ENCODE measurements at regions of chr1 and their contacts with region 1.

Region 1: DNA sequence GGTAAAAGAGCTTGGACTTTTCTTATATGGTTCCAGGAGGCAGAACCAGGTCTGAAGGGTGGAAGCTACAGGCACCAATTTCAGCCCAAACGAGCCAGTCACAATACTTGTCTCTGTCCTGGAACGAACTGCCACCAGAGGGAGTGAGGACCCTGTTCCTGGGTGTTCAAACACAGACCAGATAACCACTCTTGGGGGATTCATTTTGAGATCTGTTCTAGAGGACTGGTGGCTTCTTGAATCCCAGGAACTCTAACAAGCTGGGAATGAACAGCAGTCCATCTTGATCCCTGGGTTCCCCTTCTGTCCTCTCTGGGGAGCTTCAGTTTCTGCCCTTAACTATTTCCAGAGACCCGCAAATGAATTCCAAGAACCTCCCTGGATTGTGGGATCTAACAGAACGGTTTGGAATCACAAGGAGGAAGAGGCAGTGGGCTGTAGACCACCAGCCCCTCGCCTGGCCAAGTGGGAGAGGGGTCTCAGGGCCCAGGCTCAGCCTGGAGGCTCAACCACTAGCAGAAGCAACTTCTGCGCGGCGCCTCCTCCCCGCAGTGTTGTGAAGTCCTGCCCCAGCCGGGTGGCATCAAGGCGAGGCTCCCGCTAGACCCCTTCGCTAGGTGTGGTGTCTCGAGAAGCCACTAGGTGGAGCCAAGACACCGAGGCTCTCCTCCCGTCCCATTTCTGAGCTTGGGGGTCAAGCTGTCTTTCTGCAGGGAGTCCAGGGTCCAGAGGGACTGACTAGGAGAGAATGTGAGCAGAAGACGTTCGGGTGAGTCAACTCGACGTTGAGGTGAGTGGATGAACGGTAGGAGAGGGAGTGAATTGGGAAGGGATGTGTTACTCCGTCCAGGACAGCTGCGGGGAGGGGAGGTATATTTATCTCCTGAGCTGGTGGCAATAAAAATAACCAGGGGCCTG is 12.1 kb upstream of the NES start:
- DNase-seq: no peak
- H3K4me3 ChIP-seq: peak overlapping the region; percentile 15; the same call in 1 of the 2 replicates
- H3K27me3 ChIP-seq: no peaks in the 10 kb centered on the region
- CTCF ChIP-seq: peak; percentile 95

Region 2: DNA sequence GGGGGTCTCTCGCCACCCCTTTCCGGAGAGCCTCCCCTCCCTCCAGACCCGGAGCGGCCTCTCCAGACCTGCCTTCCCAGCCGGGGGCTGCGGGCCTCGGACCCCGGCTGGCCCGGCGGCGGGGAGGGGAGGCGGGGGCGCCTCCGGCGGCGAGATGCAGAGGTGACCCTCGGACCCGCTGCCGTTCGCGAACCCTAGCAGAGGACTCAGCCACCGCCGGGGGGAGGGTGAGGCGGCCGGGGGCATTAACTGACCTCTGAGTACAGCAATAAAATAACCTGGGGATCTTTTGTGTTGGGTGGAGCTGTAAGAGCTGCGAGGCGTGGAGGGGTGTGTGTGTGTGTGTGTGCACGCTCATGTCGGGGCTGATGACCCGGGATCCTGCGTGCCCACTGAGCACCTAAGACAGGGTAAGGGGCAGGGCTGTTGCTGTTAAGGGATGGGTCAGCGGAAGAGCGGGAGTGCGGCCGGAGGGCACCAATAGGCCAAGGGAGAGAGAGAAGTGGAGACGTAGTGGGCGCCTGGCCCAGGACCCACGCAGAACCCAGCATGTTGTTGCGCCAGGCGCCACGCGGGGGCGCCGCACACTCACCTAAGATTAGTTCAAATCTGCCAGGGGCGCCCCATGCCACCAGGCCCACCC is 63.7 kb before region 1 on chr1:
- CTCF ChIA-PET with region 1: interaction called, 155 read pairs
- POLR2A ChIA-PET with region 1: no interaction called
- DNase-seq: no peak
- H3K4me3 ChIP-seq: no peak overlapping the region
- H3K27me3 ChIP-seq: peaks cover 29% of the 10 kb centered on the region
- CTCF ChIP-seq: peak; percentile 90

Region 3: DNA sequence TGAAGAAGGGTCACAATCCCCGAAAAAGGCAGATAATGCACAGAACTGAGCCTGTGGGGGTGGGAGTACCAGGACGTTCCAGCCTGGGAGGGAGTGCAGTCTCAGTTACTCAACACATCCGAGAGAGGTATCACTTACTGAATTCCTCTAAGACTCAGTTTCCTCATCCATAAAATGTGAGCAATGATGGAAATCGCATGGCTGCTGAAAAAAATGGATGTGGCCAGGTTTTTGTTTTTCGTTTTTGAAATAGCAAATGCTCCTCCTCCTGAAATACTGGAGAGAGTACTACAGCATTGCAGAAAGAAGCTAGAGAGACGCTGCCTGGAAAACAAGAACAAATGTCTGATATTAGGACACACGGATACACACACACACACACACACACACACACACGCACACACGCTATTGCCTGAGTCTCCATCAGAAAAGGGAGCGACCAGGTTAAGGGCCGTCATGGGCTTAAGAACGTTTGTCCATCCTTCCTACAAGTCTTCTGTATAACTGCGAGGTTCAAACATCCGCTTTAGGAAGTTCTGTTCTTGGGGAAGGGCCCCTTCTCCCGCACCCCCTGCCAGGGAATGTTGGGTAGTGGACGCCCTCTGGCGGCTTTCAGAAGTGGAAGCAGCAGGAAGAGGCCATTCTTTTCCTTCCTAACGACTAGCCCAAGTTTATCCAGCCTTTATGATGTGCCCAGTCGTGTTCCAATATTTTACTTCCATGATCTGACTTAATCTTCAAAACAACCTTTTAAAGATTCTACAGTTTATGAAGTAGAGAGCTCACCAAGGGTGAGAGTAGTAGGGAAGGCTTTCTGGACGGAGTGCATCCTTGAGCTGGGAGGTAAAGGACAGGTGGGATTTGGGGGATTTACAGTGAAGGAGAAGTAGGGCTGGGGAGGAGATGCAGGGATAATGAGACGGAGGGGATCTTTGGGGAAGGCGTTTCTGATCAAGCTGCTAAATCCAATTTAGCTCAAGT is 11.4 kb before region 1 on chr1:
- CTCF ChIA-PET with region 1: interaction called, 1,556 read pairs
- POLR2A ChIA-PET with region 1: no interaction called
- DNase-seq: no peak
- H3K4me3 ChIP-seq: peak overlapping the region; percentile 55
- H3K27me3 ChIP-seq: no peaks in the 10 kb centered on the region
- CTCF ChIP-seq: peak; percentile 93

Region 4: DNA sequence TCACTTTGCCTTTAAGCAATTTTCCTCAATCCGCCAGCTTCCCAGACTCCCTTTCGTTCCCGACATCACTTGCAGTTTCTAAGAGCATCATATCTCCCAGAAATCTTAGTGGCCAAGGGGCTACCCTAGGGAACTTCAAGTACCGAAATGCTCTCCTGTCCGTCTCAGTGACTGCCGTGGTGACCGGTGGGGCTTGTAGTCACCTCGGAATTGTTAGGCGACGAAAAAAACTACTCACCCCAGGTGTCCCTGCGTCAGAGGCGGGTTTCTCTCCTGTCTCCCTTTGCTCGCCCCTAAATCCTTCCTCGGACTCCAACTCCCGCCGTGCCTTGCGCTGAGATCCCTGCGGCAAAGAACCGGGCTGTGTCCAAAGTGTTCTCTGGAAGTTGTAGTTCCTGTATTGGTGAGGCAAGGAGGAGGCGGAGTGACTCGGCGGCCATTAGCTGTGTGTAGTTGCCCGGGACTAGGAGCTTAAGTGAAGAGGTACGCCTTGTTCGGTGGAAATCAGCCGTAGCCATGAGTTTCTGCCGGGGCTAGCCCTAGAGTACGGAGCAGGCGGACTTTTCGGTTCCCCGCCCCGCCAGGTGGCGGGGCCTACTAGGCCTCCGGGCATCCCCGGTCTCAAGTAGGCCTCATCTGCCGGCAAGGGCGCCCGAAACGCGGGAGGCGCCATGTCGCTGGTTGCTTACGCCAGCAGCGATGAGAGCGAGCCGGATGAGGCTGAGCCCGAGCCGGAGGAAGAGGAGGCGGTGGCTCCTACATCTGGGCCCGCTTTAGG is 78.0 kb after region 1 on chr1 and contains the start of gene PRCC:
- CTCF ChIA-PET with region 1: interaction called, 17 read pairs
- POLR2A ChIA-PET with region 1: no interaction called
- DNase-seq: peak; percentile 100
- H3K4me3 ChIP-seq: peak within 1 kb of the TSS; percentile 97
- H3K27me3 ChIP-seq: no peaks in the 10 kb centered on the region
- CTCF ChIP-seq: no peak
- polyA plus RNA-seq, gene PRCC: 60.3 and 93.6 TPM in 2 replicates

Region 5: GRCh38 chr1:156797212-156797871 is 108.0 kb after region 1 on chr1:
- CTCF ChIA-PET with region 1: interaction called, 31 read pairs
- POLR2A ChIA-PET with region 1: no interaction called
- DNase-seq: no peak
- H3K4me3 ChIP-seq: no peak overlapping the region
- H3K27me3 ChIP-seq: no peaks in the 10 kb centered on the region
- CTCF ChIP-seq: peak; percentile 85

Region 6: DNA sequence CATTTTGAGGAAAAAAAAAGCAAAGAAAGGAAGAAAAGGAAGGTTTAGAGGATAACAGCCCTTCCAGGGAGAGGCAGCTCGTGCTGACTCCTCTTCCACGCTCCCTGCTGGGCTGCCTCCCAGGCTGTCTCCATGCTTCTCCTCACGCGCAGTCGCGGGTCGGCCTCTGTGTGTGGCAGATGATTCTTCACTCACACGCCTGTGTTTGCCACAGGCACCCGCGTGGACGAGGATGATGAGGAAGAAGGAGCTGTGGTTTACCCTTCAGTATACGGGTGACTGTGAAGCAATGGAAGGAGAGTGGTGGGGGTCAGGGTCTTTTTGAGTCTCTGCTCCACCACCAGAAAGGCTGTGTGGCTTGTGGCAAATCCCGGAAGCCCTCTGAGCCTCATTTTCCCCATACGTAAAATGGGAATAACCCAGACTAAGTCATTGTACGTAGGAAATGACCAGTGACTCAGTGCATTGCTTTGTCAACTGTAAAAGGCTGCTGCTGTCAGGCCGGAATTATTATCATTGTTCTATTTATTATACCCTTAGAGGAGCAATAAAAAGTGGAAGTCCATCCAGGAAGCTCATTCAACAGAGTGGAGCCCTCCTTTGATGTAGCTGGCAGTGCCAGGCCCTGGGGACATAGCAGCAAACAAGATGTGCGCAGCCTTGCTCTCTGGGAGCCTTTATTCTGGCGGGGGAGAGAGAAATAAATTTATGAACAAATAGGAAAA is 139.3 kb after region 1 on chr1:
- CTCF ChIA-PET with region 1: no interaction called
- POLR2A ChIA-PET with region 1: no interaction called
- DNase-seq: no peak
- H3K4me3 ChIP-seq: no peak overlapping the region
- H3K27me3 ChIP-seq: peaks cover 23% of the 10 kb centered on the region
- CTCF ChIP-seq: no peak

Region 7: GRCh38 chr1:156892190-156893047 is 203.1 kb after region 1 on chr1:
- CTCF ChIA-PET with region 1: interaction called, 73 read pairs
- POLR2A ChIA-PET with region 1: no interaction called
- DNase-seq: no peak
- H3K4me3 ChIP-seq: peak overlapping the region; percentile 16
- H3K27me3 ChIP-seq: peaks cover 2% of the 10 kb centered on the region; the same call in 1 of the 2 replicates
- CTCF ChIP-seq: peak; percentile 91